Activated CD8-positive, alpha-beta T cell treated with anti-CD3 and anti-CD28 coated beads, Interleukin-2, amount 10 ng/mL, durations not matched to agents 7 days and 5 days (primary cell): ENCODE measurements at regions of chr5 and their contacts with region 1.

Region 1: DNA sequence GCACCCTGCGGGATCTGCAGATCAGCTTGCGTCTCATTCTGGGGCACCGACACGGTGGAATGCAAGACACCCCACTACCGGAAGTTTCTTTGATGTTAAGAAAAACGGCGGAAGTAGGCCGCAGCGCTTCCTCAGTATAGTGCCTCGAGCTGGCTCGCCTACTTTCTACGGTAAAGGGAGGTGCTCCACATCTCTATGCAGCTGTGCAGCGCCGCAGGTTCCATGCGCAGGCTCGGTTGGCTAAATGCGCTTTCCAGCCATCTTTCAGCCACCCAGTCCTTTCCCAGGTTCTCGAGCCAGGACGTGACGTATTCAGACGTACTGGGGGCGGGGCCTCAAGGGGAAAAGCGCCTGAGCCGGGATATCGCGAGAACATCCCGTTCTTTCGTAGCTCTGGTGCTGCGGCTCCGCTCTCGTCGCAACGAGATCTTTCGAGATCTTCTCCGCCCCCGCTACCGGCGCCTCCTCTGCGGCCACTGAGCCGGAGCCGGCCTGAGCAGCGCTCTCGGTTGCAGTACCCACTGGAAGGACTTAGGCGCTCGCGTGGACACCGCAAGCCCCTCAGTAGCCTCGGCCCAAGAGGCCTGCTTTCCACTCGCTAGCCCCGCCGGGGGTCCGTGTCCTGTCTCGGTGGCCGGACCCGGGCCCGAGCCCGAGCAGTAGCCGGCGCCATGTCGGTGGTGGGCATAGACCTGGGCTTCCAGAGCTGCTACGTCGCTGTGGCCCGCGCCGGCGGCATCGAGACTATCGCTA is at the start of gene HSPA4:
- DNase-seq: peak; percentile 99
- ATAC-seq: peak; percentile 84
- H3K4me3 Mint-ChIP-seq: peak within 1 kb of the TSS; percentile 98
- H3K27ac Mint-ChIP-seq: peak within 1 kb of the TSS; percentile 100
- H3K4me1 Mint-ChIP-seq: peaks cover 51% of the 10 kb centered on the region
- H3K27me3 Mint-ChIP-seq: no peaks in the 10 kb centered on the region
- total RNA-seq, gene HSPA4: 106 to 108 TPM

Region 2: DNA sequence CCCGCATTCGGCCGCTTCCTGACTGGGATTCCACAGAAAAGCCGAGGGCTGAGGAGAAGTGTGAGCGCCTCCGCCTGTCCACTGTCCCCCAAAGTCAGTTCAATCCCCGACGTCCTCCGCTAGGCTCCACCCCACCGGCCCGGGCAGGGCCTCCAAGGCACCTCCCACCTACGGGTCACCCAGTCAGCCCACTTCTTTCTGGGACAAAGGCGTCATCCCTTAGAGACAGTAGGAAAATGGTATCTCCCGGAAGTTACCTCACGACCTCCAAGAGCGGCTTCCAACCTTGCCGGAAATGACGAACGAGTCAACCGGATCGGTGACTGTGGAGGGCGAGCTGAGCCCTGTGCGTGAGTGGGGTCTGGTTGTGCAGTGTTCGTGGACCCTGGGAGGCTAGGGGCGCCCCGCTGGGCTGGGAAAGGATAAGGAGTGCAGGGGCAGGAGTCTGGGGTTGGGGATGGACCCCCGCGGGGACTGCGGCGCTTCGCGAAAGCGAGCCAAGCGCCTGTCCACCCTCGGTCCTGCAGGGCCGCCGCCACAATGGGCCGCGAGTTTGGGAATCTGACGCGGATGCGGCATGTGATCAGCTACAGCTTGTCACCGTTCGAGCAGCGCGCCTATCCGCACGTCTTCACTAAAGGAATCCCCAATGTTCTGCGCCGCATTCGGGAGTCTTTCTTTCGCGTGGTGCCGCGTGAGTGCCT is 185.3 kb before region 1 on chr5 and contains the starts of genes GDF9 and UQCRQ:
- CTCF ChIA-PET with region 1: no interaction called
- POLR2A ChIA-PET with region 1: interaction called, 12 read pairs
- DNase-seq: peak; percentile 97
- ATAC-seq: peak; percentile 99
- H3K4me3 Mint-ChIP-seq: peak within 1 kb of the TSS; percentile 98
- H3K27ac Mint-ChIP-seq: peak within 1 kb of the TSS; percentile 99
- H3K4me1 Mint-ChIP-seq: peaks cover 23% of the 10 kb centered on the region
- H3K27me3 Mint-ChIP-seq: peaks cover 3% of the 10 kb centered on the region
- total RNA-seq, gene GDF9: 0.52 to 0.92 TPM
- total RNA-seq, gene UQCRQ: 381 to 396 TPM

Region 3: DNA sequence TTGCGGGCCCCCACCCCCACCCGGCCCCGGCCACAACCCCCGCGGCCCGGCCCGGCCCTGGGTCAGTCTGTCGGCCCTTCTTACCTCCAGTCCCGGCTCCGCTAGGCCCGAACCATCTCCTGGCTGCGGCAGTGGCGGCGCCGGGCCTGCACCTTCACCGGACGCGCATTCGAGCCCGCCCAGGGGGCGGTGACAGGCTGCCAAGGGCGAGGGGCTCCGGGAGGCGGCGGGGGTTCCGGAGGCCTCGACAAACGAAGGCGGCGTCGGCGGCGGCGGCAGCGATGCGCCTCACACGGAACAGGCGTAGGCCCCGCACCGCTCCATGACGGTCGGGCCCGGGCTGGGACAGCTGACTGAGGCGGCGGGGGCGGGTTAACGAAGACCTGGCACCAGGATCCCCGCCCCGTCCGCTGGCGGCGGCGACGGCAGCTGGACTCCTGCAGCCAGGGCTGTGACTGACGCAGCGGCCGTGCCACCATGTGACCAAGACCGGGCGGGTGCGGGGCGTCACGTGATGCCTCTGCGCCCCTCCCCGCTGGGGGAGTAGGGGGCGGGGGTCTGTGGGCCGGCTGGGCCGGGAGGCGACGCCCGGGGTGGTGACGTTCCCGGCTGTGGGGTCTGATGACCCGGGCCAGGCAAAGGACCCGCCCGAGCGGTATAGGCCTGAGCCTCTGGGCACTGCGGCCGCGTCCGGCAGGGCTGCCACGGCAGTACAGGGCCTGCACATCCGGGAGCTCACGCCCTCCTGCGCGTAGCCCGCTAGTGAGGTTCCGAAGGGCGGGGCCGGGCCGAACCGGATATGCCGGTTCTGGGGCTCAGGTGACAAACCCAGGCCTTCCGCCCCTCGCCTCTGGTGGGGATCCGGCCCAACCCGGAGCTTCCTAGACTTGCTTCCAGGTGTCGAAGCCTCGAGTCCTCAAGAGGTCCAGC is 88.3 kb before region 1 on chr5 and contains the start of gene AFF4:
- CTCF ChIA-PET with region 1: no interaction called
- POLR2A ChIA-PET with region 1: interaction called, 36 read pairs
- DNase-seq: peak; percentile 88
- ATAC-seq: peak; percentile 88
- H3K4me3 Mint-ChIP-seq: peak within 1 kb of the TSS; percentile 96
- H3K27ac Mint-ChIP-seq: peak within 1 kb of the TSS; percentile 97
- H3K4me1 Mint-ChIP-seq: peaks cover 19% of the 10 kb centered on the region
- H3K27me3 Mint-ChIP-seq: no peaks in the 10 kb centered on the region
- total RNA-seq, gene AFF4: 27.2 to 30.3 TPM

Region 4: GRCh38 chr5:133025804-133026663 is 25.7 kb before region 1 on chr5 and contains the start of gene ZCCHC10:
- CTCF ChIA-PET with region 1: interaction called, 3 read pairs
- POLR2A ChIA-PET with region 1: interaction called, 32 read pairs
- DNase-seq: peak; percentile 94
- ATAC-seq: peak; percentile 99
- H3K4me3 Mint-ChIP-seq: peak within 1 kb of the TSS; percentile 88
- H3K27ac Mint-ChIP-seq: peak within 1 kb of the TSS; percentile 88
- H3K4me1 Mint-ChIP-seq: peaks cover 18% of the 10 kb centered on the region
- H3K27me3 Mint-ChIP-seq: peaks cover 1% of the 10 kb centered on the region
- total RNA-seq, gene ZCCHC10: 27.2 to 29.5 TPM

Region 5: GRCh38 chr5:133032852-133033742 is 18.7 kb before region 1 on chr5:
- CTCF ChIA-PET with region 1: no interaction called
- POLR2A ChIA-PET with region 1: interaction called, 32 read pairs
- DNase-seq: no peak
- ATAC-seq: peak; percentile 75
- H3K4me3 Mint-ChIP-seq: no peak overlapping the region
- H3K27ac Mint-ChIP-seq: no peak overlapping the region
- H3K4me1 Mint-ChIP-seq: peaks cover 7% of the 10 kb centered on the region
- H3K27me3 Mint-ChIP-seq: peaks cover 5% of the 10 kb centered on the region

Region 6: DNA sequence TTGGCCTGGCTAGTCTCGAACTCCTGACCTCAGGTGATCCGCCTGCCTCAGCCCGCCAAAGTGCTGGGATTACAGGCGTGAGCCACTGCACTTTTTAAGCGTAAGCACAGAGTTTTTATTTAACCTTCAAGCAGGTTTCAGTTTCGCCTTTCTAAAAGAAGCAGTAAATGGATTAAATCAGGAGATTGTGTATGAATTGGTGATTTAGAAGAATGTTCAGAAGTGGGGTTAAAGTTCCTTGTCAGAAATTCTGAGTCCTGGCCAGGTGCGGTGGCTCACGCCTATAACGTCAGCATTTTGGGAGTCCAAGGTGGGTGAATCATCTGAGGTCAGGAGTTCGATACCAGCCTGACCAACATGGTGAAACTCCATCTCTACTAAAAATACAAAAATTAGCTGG is 12.2 kb after region 1 on chr5:
- CTCF ChIA-PET with region 1: no interaction called
- POLR2A ChIA-PET with region 1: interaction called, 11 read pairs
- DNase-seq: no peak
- ATAC-seq: no peak
- H3K4me3 Mint-ChIP-seq: no peak overlapping the region
- H3K27ac Mint-ChIP-seq: no peak overlapping the region
- H3K4me1 Mint-ChIP-seq: peaks cover 24% of the 10 kb centered on the region
- H3K27me3 Mint-ChIP-seq: no peaks in the 10 kb centered on the region

Region 7: GRCh38 chr5:133075572-133076536 is 24.1 kb after region 1 on chr5:
- CTCF ChIA-PET with region 1: no interaction called
- POLR2A ChIA-PET with region 1: interaction called, 12 read pairs
- DNase-seq: no peak
- ATAC-seq: no peak
- H3K4me3 Mint-ChIP-seq: no peak overlapping the region
- H3K27ac Mint-ChIP-seq: no peak overlapping the region
- H3K4me1 Mint-ChIP-seq: peaks cover 11% of the 10 kb centered on the region
- H3K27me3 Mint-ChIP-seq: no peaks in the 10 kb centered on the region

Region 8: GRCh38 chr5:133123297-133123696 is 71.5 kb after region 1 on chr5:
- CTCF ChIA-PET with region 1: no interaction called
- POLR2A ChIA-PET with region 1: no interaction called
- DNase-seq: no peak
- ATAC-seq: no peak
- H3K4me3 Mint-ChIP-seq: no peak overlapping the region
- H3K27ac Mint-ChIP-seq: no peak overlapping the region
- H3K4me1 Mint-ChIP-seq: no peaks in the 10 kb centered on the region
- H3K27me3 Mint-ChIP-seq: peaks cover 2% of the 10 kb centered on the region

Region 9: DNA sequence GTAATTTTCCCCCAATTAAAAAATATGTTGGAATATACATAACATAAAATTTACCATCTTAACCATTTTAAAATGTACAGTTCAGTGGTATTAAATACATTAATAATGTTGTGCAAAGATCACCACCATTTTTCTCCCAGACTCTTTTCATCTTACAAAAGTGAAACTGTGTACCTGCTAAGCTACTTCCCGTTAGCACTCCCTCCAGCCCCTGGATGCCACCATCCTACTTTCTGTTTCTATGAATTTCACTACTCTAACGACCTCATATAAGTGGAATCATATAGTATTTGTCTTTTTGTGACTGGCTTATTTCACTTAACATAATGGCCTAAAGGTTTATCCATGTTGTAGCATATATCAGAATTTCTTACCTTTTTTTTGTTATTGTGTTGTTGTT is 113.0 kb after region 1 on chr5:
- CTCF ChIA-PET with region 1: no interaction called
- POLR2A ChIA-PET with region 1: no interaction called
- DNase-seq: no peak
- ATAC-seq: peak; percentile 57
- H3K4me3 Mint-ChIP-seq: no peak overlapping the region
- H3K27ac Mint-ChIP-seq: peak overlapping the region; percentile 9
- H3K4me1 Mint-ChIP-seq: peaks cover 9% of the 10 kb centered on the region
- H3K27me3 Mint-ChIP-seq: peaks cover 10% of the 10 kb centered on the region